Heart left ventricle (tissue), 16 donors: ENCODE measurements at regions of chr1 and their contacts with region 1.

Region 1: GRCh38 chr1:30572192-30572591 is 151.2 kb downstream of the MATN1 start:
- DNase-seq: no peak
- ATAC-seq: peak in 3 of 4 donors; percentile 68 to 89 (median 74)
- H3K4me3 ChIP-seq: no peak overlapping the region
- H3K27ac ChIP-seq: no peak overlapping the region
- H3K4me1 ChIP-seq: no peaks in the 10 kb centered on the region
- H3K27me3 ChIP-seq: peaks cover 0 to 4% (median 0%) of the 10 kb centered on the region in 9 donors
- CTCF ChIP-seq: peak in 8 of 12 donors; percentile 10 to 40 (median 22)
- POLR2A ChIP-seq: no peak

Region 2: GRCh38 chr1:30353637-30354036 is 218.6 kb before region 1 on chr1:
- intact Hi-C with region 1: loop called in 5 of 10 experiments (anchors 5 to 10 kb)
- DNase-seq: no peak
- ATAC-seq: peak in 3 of 4 donors; percentile 57 to 69 (median 59)
- H3K4me3 ChIP-seq: no peak overlapping the region
- H3K27ac ChIP-seq: no peak overlapping the region
- H3K4me1 ChIP-seq: no peaks in the 10 kb centered on the region
- H3K27me3 ChIP-seq: peaks cover 0 to 26% (median 0%) of the 10 kb centered on the region in 9 donors
- CTCF ChIP-seq: peak in 10 of 12 donors; percentile 5 to 47 (median 25)
- POLR2A ChIP-seq: no peak